Activated CD4-positive, alpha-beta T cell treated with anti-CD3 and anti-CD28 coated beads for 36 hours (primary cell): ENCODE measurements at regions of chr14 and their contacts with region 1.

Region 1: GRCh38 chr14:70955543-70956480 is 48.6 kb downstream of the PCNX1 start:
- DNase-seq: peak; percentile 59
- ATAC-seq: peak; percentile 71
- H3K4me3 Mint-ChIP-seq: no peak overlapping the region
- H3K27ac Mint-ChIP-seq: no peak overlapping the region
- H3K4me1 Mint-ChIP-seq: peaks cover 37% of the 10 kb centered on the region
- H3K27me3 Mint-ChIP-seq: no peaks in the 10 kb centered on the region

Region 2: DNA sequence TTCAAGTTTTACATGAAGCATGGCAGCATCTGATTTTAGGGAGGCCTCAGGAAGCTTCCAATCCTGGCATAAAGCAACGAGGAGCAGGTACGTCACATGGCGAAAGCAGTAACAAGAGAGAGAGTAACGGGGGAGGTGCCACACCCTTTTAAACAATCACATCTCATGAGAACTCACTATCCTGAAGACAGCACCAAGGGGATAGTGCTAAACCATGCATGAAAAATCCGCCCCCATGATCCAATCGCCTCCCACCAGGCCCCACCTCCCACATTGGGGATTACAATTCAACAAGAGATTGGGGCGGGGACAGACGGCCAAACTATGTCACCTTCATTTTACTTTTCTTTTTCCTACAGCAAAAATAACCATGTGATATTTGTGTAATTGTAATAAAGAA is 139.3 kb before region 1 on chr14:
- CTCF ChIA-PET with region 1: interaction called, 36 read pairs
- POLR2A ChIA-PET with region 1: no interaction called
- intact Hi-C with region 1: loop called in 1 of 2 experiments (anchors 1 kb)
- DNase-seq: no peak
- ATAC-seq: no peak
- H3K4me3 Mint-ChIP-seq: no peak overlapping the region
- H3K27ac Mint-ChIP-seq: no peak overlapping the region
- H3K4me1 Mint-ChIP-seq: peaks cover 10% of the 10 kb centered on the region
- H3K27me3 Mint-ChIP-seq: peaks cover 15% of the 10 kb centered on the region

Region 3: GRCh38 chr14:70942342-70942706 is 13.5 kb before region 1 on chr14:
- CTCF ChIA-PET with region 1: interaction called, 12 read pairs
- POLR2A ChIA-PET with region 1: no interaction called
- intact Hi-C with region 1: no loop called
- DNase-seq: no peak
- ATAC-seq: no peak
- H3K4me3 Mint-ChIP-seq: no peak overlapping the region
- H3K27ac Mint-ChIP-seq: peak overlapping the region; percentile 8
- H3K4me1 Mint-ChIP-seq: peaks cover 64% of the 10 kb centered on the region
- H3K27me3 Mint-ChIP-seq: no peaks in the 10 kb centered on the region